H1 (cell line): ENCODE measurements at regions of chr12 and their contacts with region 1.

Region 1: GRCh38 chr12:48977315-48978281 is 524 bp upstream of the WNT1 start:
- DNase-seq: peak in 1 of 2 experiments; percentile 88
- H3K4me3 ChIP-seq: peak overlapping the region in 3 of 4 experiments; percentile 16 to 57 (median 26); a peak in 4 of 8 replicates
- H3K27ac ChIP-seq: no peak overlapping the region
- H3K4me1 ChIP-seq: peaks cover 0 to 39% (median 30%) of the 10 kb centered on the region in 4 experiments; a peak in 6 of 7 replicates
- H3K27me3 ChIP-seq: peaks cover 78 to 99% (median 96%) of the 10 kb centered on the region in 4 experiments
- CTCF ChIP-seq: peak in 2 of 3 experiments; percentile 63 to 99; a peak in 3 of 4 replicates
- EP300 ChIP-seq: no peak
- POLR2A ChIP-seq: no peak
- RAD21 ChIP-seq: peak; percentile 18 to 36; a peak in 3 of 4 replicates

Region 2: GRCh38 chr12:48814262-48815125 is 163.1 kb before region 1 on chr12:
- CTCF ChIA-PET with region 1: interaction called, 11 read pairs
- POLR2A ChIA-PET with region 1: interaction called, 3 read pairs
- DNase-seq: peak in 1 of 2 experiments; percentile 94
- H3K4me3 ChIP-seq: peak overlapping the region; percentile 59 to 94 (median 88)
- H3K27ac ChIP-seq: no peak overlapping the region
- H3K4me1 ChIP-seq: peaks cover 0 to 27% (median 19%) of the 10 kb centered on the region in 4 experiments; a peak in 6 of 7 replicates
- H3K27me3 ChIP-seq: peaks cover 17 to 46% (median 36%) of the 10 kb centered on the region in 4 experiments
- CTCF ChIP-seq: peak in 2 of 3 experiments; percentile 95 to 99; a peak in 3 of 4 replicates
- EP300 ChIP-seq: no peak; a peak in 1 of 3 replicates
- POLR2A ChIP-seq: no peak
- RAD21 ChIP-seq: peak in 1 of 2 experiments; percentile 48; a peak in 2 of 4 replicates

Region 3: GRCh38 chr12:48924617-48925303 is 52.8 kb before region 1 on chr12:
- CTCF ChIA-PET with region 1: interaction called, 30 read pairs
- POLR2A ChIA-PET with region 1: interaction called, 3 read pairs
- DNase-seq: peak; percentile 29 to 79
- H3K4me3 ChIP-seq: peak overlapping the region; percentile 61 to 86 (median 70)
- H3K27ac ChIP-seq: peak overlapping the region; percentile 55
- H3K4me1 ChIP-seq: peaks cover 0 to 14% (median 4%) of the 10 kb centered on the region in 4 experiments; a peak in 4 of 7 replicates
- H3K27me3 ChIP-seq: no peaks in the 10 kb centered on the region; a peak in 1 of 7 replicates
- CTCF ChIP-seq: peak; percentile 64 to 71 (median 69)
- EP300 ChIP-seq: no peak
- POLR2A ChIP-seq: peak; percentile 27 to 44; a peak in 2 of 3 replicates
- RAD21 ChIP-seq: peak; percentile 46 to 61

Region 4: DNA sequence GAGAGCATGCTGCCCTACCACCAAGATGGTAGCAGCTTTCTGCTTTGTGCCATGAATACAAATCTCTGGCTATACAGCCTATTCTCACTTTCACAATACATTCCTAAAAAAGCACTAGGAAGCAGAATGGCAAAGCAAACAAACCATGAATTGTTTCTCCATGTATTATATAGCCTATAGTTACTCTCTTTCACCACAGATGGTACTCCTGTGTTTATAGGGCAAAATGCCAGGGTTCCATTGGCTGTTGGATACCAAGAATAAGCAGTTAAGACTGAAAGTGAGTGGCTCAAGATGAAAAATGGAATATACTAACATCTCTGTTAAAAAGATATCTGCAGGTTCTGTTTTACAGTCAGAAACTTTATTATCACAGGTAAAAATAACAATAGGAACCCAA is 31.4 kb before region 1 on chr12:
- CTCF ChIA-PET with region 1: interaction called, 1,336 read pairs
- POLR2A ChIA-PET with region 1: no interaction called
- DNase-seq: no peak
- H3K4me3 ChIP-seq: no peak overlapping the region
- H3K27ac ChIP-seq: no peak overlapping the region
- H3K4me1 ChIP-seq: no peaks in the 10 kb centered on the region; a peak in 1 of 7 replicates
- H3K27me3 ChIP-seq: no peaks in the 10 kb centered on the region
- CTCF ChIP-seq: no peak
- EP300 ChIP-seq: no peak
- POLR2A ChIP-seq: no peak
- RAD21 ChIP-seq: no peak

Region 5: GRCh38 chr12:48995061-48995879 is 17.7 kb after region 1 on chr12:
- CTCF ChIA-PET with region 1: interaction called, 1,336 read pairs
- POLR2A ChIA-PET with region 1: interaction called, 21 read pairs
- DNase-seq: peak in 1 of 2 experiments; percentile 92
- H3K4me3 ChIP-seq: peak overlapping the region in 1 of 4 experiments; percentile 40; a peak in 2 of 8 replicates
- H3K27ac ChIP-seq: no peak overlapping the region
- H3K4me1 ChIP-seq: peaks cover 9 to 29% (median 16%) of the 10 kb centered on the region in 4 experiments
- H3K27me3 ChIP-seq: peaks cover 50 to 74% (median 70%) of the 10 kb centered on the region in 4 experiments
- CTCF ChIP-seq: peak; percentile 74 to 91 (median 76)
- EP300 ChIP-seq: peak in 1 of 2 experiments; percentile 47; a peak in 1 of 3 replicates
- POLR2A ChIP-seq: no peak
- RAD21 ChIP-seq: peak; percentile 80 to 83